ENCODE measurements at regions of chr1 and their contacts with region 1.

Region 1: DNA sequence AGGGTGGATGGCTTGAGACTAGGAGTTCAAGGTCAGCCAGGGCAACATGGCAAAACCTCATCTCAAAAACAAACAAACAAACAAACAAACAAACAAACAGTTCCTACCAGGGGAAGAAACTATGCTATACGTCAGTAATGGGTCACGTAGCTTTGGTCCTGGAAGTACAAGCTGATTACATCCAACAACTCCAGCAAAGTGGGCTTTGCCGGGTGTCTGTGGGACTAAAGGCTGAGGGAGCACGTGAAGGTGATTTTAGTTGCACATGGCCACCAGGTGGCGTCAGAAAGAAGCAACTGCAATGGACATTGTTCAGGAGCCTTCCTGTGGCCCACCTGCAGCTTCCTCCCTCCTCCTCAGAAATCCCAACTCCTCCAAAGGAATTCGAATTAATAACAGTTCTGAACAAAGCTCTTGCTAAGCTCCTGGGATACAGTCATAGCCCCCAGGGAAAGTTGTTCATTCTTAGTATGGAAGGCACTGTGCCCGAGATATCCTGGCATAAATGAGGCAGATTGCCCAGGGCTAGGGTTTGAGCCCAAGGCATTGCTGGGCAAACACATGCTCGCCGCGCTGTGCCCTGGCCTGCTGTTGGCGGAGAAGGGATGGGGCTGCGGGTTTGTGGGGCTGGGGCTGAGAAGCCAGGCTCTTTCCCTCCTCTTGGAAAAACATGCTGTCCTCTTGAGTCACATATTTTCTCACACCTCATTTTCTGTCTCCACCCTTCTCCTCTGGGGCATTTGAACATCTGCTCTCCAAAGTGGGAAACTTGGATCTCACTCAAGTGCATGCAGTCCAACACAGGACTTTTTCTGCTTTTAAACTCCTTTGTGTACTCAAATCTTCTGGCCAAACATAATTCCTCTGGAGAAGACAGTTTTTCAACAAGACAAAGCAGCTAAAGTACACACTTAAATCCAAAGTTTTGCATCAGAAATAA is 28.6 kb downstream of the AKNAD1 start:
- DNase-seq: peak; percentile 78 to 90 (median 80)
- ATAC-seq: peak; percentile 88
- H3K4me3 ChIP-seq: no peak overlapping the region
- H3K27ac ChIP-seq: no peak overlapping the region
- H3K4me1 ChIP-seq: peaks cover 3 to 4% of the 10 kb centered on the region in 2 experiments; a peak in 3 of 5 replicates
- H3K27me3 ChIP-seq: no peaks in the 10 kb centered on the region
- CTCF ChIP-seq: peak; percentile 86 to 92 (median 87)
- EP300 ChIP-seq: no peak
- POLR2A ChIP-seq: no peak
- RAD21 ChIP-seq: peak; percentile 75 to 92

Region 2: DNA sequence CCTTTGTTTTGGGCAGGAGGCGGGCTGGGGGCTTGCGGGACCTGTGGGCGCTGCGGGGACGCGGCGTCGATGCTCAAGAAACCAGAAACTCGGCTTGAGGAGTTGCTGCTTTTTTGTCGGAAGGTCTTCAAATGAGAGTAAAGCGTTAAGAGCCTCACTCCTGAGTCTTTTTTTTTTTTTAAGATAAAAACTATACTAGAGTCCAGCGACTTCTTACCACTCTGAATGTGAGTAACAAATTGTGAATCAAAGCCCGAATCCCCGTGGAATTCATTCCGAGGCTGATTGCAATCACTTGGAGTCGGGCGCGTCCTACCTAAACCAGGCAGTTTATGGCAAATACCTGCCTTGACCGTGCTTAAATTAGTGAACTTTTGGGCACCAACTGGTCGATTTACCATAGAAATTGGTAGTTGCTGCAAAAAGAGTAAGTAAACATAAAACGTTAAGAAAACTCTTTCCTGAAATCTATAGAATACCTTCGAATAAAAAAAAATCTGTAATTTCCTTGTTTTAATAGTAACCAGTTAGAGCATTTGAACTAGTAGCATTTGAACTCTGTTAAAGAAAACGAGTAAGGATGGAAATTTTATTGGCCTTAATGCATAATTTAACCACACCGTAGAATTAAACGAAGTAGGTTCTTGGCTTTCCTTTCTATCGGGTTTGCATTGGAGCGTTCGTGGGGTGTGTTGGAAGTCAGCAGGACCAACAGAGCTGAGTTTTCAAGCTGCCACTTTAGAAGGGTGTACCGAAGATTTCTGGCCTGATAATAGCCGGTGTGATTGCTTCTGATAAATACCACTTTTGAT is 49.3 kb after region 1 on chr1:
- CTCF ChIA-PET with region 1: no interaction called
- POLR2A ChIA-PET with region 1: interaction called, 3 read pairs
- in situ Hi-C with region 1: no loop called
- intact Hi-C with region 1: loop called (anchors 5 kb)
- DNase-seq: peak in 1 of 4 experiments; percentile 47
- ATAC-seq: peak; percentile 29
- H3K4me3 ChIP-seq: peak overlapping the region; percentile 92
- H3K27ac ChIP-seq: peak overlapping the region; percentile 77
- H3K4me1 ChIP-seq: peaks cover 9 to 12% of the 10 kb centered on the region in 2 experiments; a peak in 4 of 5 replicates
- H3K27me3 ChIP-seq: no peaks in the 10 kb centered on the region
- CTCF ChIP-seq: no peak
- EP300 ChIP-seq: no peak
- POLR2A ChIP-seq: no peak
- RAD21 ChIP-seq: no peak

Region 3: DNA sequence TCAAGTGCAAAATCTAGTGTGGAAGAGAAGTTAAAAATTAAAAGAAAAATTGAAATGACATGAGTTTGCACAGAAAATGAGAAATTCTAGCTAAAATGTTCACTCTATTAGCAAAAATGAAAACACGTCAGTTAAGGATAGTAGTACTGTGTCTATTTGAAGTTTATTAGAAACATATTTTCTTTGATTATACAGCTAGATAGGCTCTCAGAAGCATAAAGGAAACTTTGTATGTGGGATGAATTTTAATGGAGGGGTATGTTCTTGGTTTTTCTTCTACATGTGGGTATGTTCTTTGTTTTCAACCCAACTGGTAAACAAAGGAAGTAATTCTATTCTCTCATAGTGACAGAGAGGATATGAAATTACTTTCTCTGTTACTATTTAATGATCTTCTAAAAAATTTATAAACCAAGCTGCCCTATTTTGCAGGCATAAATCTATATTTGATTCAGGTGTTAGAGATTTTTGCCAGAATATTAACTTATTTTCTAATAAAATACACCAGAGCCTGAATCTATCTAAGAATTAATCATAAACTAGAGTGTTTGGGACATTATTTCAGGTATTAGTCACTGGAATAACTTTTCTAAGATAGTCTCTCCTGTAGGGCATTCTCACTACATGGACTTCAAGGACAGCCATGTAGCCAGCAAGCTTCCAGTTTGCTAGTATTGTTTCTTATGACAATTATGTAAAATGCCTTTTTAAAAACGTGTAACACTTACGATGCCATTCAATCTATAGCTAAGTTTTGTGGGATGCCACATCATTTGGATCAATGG is 64.3 kb after region 1 on chr1:
- CTCF ChIA-PET with region 1: interaction called, 89 read pairs
- POLR2A ChIA-PET with region 1: no interaction called
- in situ Hi-C with region 1: loop called (anchors 5 kb)
- intact Hi-C with region 1: no loop called
- DNase-seq: no peak
- ATAC-seq: no peak
- H3K4me3 ChIP-seq: no peak overlapping the region
- H3K27ac ChIP-seq: no peak overlapping the region
- H3K4me1 ChIP-seq: peaks cover 0 to 12% of the 10 kb centered on the region in 2 experiments; a peak in 2 of 5 replicates
- H3K27me3 ChIP-seq: no peaks in the 10 kb centered on the region; a peak in 1 of 5 replicates
- CTCF ChIP-seq: no peak
- EP300 ChIP-seq: no peak
- POLR2A ChIP-seq: no peak
- RAD21 ChIP-seq: no peak

Region 4: GRCh38 chr1:108983114-108983513 is 154.8 kb after region 1 on chr1:
- CTCF ChIA-PET with region 1: no interaction called
- POLR2A ChIA-PET with region 1: no interaction called
- in situ Hi-C with region 1: no loop called
- intact Hi-C with region 1: no loop called
- DNase-seq: no peak
- ATAC-seq: no peak
- H3K4me3 ChIP-seq: no peak overlapping the region
- H3K27ac ChIP-seq: no peak overlapping the region
- H3K4me1 ChIP-seq: no peaks in the 10 kb centered on the region
- H3K27me3 ChIP-seq: no peaks in the 10 kb centered on the region
- CTCF ChIP-seq: no peak
- EP300 ChIP-seq: no peak
- POLR2A ChIP-seq: no peak
- RAD21 ChIP-seq: no peak